Caco-2 (cell line): ENCODE measurements at regions of chr4 and their contacts with region 1.

Region 1: GRCh38 chr4:77308843-77309242 is 151.8 kb downstream of the CCNG2 start:
- DNase-seq: peak in 1 of 2 experiments; percentile 11
- H3K4me3 ChIP-seq: no peak overlapping the region
- H3K4me3 Mint-ChIP-seq: no peak overlapping the region
- H3K27ac Mint-ChIP-seq: no peak overlapping the region
- H3K4me1 ChIP-seq: no peaks in the 10 kb centered on the region
- H3K4me1 Mint-ChIP-seq: no peaks in the 10 kb centered on the region
- H3K27me3 ChIP-seq: no peaks in the 10 kb centered on the region
- H3K27me3 Mint-ChIP-seq: no peaks in the 10 kb centered on the region
- CTCF ChIP-seq: peak in 1 of 2 experiments; percentile 45

Region 2: GRCh38 chr4:77095101-77095821 is 213.6 kb before region 1 on chr4:
- CTCF ChIA-PET with region 1: no interaction called
- POLR2A ChIA-PET with region 1: no interaction called
- intact Hi-C with region 1: loop called (anchors 1 kb)
- DNase-seq: peak; percentile 69 to 72
- H3K4me3 ChIP-seq: no peak overlapping the region
- H3K4me3 Mint-ChIP-seq: no peak overlapping the region
- H3K27ac Mint-ChIP-seq: no peak overlapping the region
- H3K4me1 ChIP-seq: no peaks in the 10 kb centered on the region
- H3K4me1 Mint-ChIP-seq: no peaks in the 10 kb centered on the region
- H3K27me3 ChIP-seq: no peaks in the 10 kb centered on the region
- H3K27me3 Mint-ChIP-seq: no peaks in the 10 kb centered on the region
- CTCF ChIP-seq: peak; percentile 79 to 80

Region 3: DNA sequence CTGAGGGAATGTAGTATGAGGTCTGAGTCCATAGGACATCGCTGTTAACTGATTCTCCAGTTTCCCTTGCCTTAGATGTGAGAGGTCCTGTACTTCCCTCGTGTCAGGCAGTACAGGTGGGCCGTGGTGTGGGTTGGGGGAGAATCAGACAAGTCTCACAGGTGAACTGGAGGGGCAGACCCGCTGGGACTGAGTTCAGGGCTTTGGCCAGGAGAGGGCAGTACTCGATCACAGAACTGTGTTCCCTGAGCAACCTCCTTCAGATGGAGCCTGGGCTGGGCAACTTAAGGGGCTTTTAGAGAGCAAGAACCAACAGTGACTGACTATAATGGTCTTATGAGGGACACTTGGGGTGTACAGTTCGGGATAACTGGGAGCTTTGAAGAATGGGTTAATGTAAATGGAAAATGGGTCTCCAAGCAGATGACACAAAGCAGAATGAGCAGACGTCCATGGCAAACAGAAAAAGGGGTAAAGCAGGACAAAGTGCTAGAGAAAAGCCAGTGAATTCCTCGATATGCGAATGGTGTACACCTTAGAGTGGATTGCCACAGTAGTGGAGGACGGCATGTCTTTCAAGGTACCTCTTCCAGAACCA is 68.3 kb before region 1 on chr4:
- CTCF ChIA-PET with region 1: interaction called, 14 read pairs
- POLR2A ChIA-PET with region 1: no interaction called
- intact Hi-C with region 1: loop called (anchors 1 kb)
- DNase-seq: peak; percentile 74 to 78
- H3K4me3 ChIP-seq: no peak overlapping the region
- H3K4me3 Mint-ChIP-seq: no peak overlapping the region
- H3K27ac Mint-ChIP-seq: no peak overlapping the region
- H3K4me1 ChIP-seq: no peaks in the 10 kb centered on the region
- H3K4me1 Mint-ChIP-seq: no peaks in the 10 kb centered on the region
- H3K27me3 ChIP-seq: no peaks in the 10 kb centered on the region; the same call in 1 of the 2 replicates
- H3K27me3 Mint-ChIP-seq: peaks cover 6% of the 10 kb centered on the region
- CTCF ChIP-seq: peak; percentile 73 to 79

Region 4: GRCh38 chr4:77263247-77263646 is 45.6 kb before region 1 on chr4:
- CTCF ChIA-PET with region 1: no interaction called
- POLR2A ChIA-PET with region 1: no interaction called
- intact Hi-C with region 1: loop called (anchors 5 kb)
- DNase-seq: no peak
- H3K4me3 ChIP-seq: no peak overlapping the region
- H3K4me3 Mint-ChIP-seq: no peak overlapping the region
- H3K27ac Mint-ChIP-seq: peak overlapping the region; percentile 9
- H3K4me1 ChIP-seq: peaks cover 11% of the 10 kb centered on the region; the same call in 1 of the 2 replicates
- H3K4me1 Mint-ChIP-seq: peaks cover 14% of the 10 kb centered on the region
- H3K27me3 ChIP-seq: no peaks in the 10 kb centered on the region
- H3K27me3 Mint-ChIP-seq: no peaks in the 10 kb centered on the region
- CTCF ChIP-seq: no peak

Region 5: DNA sequence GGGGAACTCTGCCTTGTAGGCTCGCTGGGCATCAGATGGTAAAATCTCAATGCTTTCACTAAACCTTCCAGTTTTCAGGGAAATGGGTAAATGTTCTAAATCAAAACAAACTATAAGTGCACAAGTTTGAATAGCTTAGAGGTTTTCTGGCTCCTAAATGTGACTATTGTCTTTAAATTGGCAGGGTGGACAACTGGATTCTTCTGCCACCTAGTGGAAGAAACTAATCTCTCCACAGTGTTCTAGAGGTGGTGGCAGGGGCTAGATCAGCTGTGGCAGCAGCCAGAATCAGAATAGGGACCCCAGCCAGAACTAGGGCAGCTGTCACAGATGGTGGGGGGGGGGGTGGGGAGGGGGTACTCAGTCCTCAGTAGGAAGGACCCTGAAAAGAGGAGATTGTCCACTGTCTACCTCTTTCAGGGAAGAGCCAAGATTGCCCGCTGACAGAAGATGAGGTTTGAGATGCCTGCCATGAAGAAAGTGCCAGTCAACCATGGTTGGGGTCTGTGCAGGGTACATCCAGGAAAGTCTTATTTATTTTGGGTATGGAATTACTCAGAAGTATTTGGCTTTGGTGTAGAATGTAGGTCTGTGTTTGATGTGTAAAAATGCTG is 49.6 kb after region 1 on chr4:
- CTCF ChIA-PET with region 1: no interaction called
- POLR2A ChIA-PET with region 1: no interaction called
- intact Hi-C with region 1: loop called (anchors 2 kb)
- DNase-seq: peak in 1 of 2 experiments; percentile 47
- H3K4me3 ChIP-seq: no peak overlapping the region
- H3K4me3 Mint-ChIP-seq: no peak overlapping the region
- H3K27ac Mint-ChIP-seq: no peak overlapping the region
- H3K4me1 ChIP-seq: no peaks in the 10 kb centered on the region
- H3K4me1 Mint-ChIP-seq: no peaks in the 10 kb centered on the region
- H3K27me3 ChIP-seq: no peaks in the 10 kb centered on the region
- H3K27me3 Mint-ChIP-seq: no peaks in the 10 kb centered on the region
- CTCF ChIP-seq: peak; percentile 51 to 55

Region 6: GRCh38 chr4:77376788-77377460 is 68.1 kb after region 1 on chr4:
- CTCF ChIA-PET with region 1: no interaction called
- POLR2A ChIA-PET with region 1: no interaction called
- intact Hi-C with region 1: no loop called
- DNase-seq: no peak
- H3K4me3 ChIP-seq: no peak overlapping the region
- H3K4me3 Mint-ChIP-seq: no peak overlapping the region
- H3K27ac Mint-ChIP-seq: no peak overlapping the region
- H3K4me1 ChIP-seq: no peaks in the 10 kb centered on the region
- H3K4me1 Mint-ChIP-seq: no peaks in the 10 kb centered on the region
- H3K27me3 ChIP-seq: no peaks in the 10 kb centered on the region
- H3K27me3 Mint-ChIP-seq: peaks cover 18% of the 10 kb centered on the region
- CTCF ChIP-seq: no peak

Region 7: GRCh38 chr4:77734928-77735327 is 426.1 kb after region 1 on chr4:
- CTCF ChIA-PET with region 1: no interaction called
- POLR2A ChIA-PET with region 1: no interaction called
- intact Hi-C with region 1: no loop called
- DNase-seq: peak; percentile 25 to 34
- H3K4me3 ChIP-seq: no peak overlapping the region
- H3K4me3 Mint-ChIP-seq: no peak overlapping the region
- H3K27ac Mint-ChIP-seq: no peak overlapping the region
- H3K4me1 ChIP-seq: no peaks in the 10 kb centered on the region
- H3K4me1 Mint-ChIP-seq: peaks cover 8% of the 10 kb centered on the region
- H3K27me3 ChIP-seq: no peaks in the 10 kb centered on the region
- H3K27me3 Mint-ChIP-seq: no peaks in the 10 kb centered on the region
- CTCF ChIP-seq: peak in 1 of 2 experiments; percentile 10